ENCODE measurements at regions of chr17 and their contacts with region 1.

Region 1: DNA sequence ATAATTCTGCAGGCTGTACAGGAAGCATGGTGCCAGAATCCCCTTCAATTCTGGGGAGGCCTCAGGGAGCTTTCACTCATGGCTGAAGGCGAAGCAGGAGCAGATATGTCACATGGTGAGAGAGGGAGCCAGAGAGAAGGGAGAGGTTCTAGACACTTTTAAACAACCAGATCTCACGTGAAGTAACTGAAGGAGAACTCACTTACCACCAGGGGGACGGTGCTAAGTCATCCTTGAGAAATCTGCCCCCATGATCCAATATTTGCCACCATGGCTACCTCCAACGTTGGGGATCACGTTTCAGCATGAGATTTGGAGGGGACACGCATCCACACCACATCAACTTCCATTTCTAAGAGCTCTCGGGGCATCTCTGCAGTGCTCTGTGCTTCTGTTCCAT is 37.4 kb upstream of the GNA13 start:
- DNase-seq: no peak
- CTCF ChIP-seq: no peak

Region 2: GRCh38 chr17:65081439-65081838 is 12.5 kb before region 1 on chr17:
- CTCF ChIA-PET with region 1: interaction called, 11 read pairs
- POLR2A ChIA-PET with region 1: no interaction called
- DNase-seq: no peak
- CTCF ChIP-seq: no peak